Spleen (tissue), 13 donors: ENCODE measurements at regions of chr6 and their contacts with region 1.

Region 1: GRCh38 chr6:165439928-165440554 is 130.6 kb upstream of the C6orf118 start:
- DNase-seq: no peak
- H3K4me3 ChIP-seq: no peak overlapping the region
- H3K27ac ChIP-seq: no peak overlapping the region
- H3K4me1 ChIP-seq: no peaks in the 10 kb centered on the region
- H3K27me3 ChIP-seq: no peaks in the 10 kb centered on the region
- CTCF ChIP-seq: peak in 8 of 11 experiments; percentile 11 to 56 (median 50)
- POLR2A ChIP-seq: no peak

Region 2: GRCh38 chr6:165274611-165275010 is 165.4 kb before region 1 on chr6:
- intact Hi-C with region 1: no loop called
- DNase-seq: no peak
- H3K4me3 ChIP-seq: no peak overlapping the region
- H3K27ac ChIP-seq: no peak overlapping the region
- H3K4me1 ChIP-seq: no peaks in the 10 kb centered on the region
- H3K27me3 ChIP-seq: no peaks in the 10 kb centered on the region
- CTCF ChIP-seq: no peak
- POLR2A ChIP-seq: no peak

Region 3: DNA sequence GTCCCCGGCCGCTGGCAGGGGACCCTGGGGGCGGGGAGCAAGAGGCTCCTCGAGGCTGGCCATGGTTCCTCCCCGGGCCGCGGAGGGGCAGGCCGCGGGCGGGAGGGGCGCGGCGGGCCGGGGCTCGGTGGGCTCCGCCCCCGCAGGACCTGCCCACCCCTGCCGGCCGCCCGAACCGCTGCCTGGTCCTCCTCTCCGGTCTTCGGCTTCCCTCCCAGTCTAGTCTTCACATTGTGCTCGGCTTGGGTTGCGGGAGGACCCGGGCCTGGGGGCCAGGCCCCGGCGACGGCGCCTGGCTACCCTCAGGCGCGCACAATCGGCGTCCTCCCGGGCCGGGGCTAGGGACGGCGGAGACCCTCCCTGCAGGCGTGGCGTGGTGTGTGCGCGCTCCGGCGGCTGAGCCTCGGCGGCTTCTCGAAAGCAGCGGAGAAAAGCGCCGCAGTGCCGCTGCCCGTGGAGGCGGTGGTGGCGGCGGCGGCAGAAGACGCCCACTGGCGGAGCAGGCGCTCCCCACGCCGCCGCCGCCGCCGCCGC is 222.8 kb after region 1 on chr6 and contains the start of gene PDE10A:
- intact Hi-C with region 1: loop called (anchors 10 kb)
- DNase-seq: no peak
- H3K4me3 ChIP-seq: peak within 1 kb of the TSS; percentile 30 to 72 (median 50)
- H3K27ac ChIP-seq: peak within 1 kb of the TSS in 7 of 8 donors; percentile 55 to 85 (median 75)
- H3K4me1 ChIP-seq: peaks cover 0 to 46% (median 24%) of the 10 kb centered on the region in 6 donors
- H3K27me3 ChIP-seq: peaks cover 0 to 93% (median 49%) of the 10 kb centered on the region in 7 donors
- CTCF ChIP-seq: peak in 1 of 11 experiments; percentile 22
- POLR2A ChIP-seq: no peak
- total RNA-seq, gene PDE10A: 7.5 to 28.2 (median 10.6) TPM

Region 4: DNA sequence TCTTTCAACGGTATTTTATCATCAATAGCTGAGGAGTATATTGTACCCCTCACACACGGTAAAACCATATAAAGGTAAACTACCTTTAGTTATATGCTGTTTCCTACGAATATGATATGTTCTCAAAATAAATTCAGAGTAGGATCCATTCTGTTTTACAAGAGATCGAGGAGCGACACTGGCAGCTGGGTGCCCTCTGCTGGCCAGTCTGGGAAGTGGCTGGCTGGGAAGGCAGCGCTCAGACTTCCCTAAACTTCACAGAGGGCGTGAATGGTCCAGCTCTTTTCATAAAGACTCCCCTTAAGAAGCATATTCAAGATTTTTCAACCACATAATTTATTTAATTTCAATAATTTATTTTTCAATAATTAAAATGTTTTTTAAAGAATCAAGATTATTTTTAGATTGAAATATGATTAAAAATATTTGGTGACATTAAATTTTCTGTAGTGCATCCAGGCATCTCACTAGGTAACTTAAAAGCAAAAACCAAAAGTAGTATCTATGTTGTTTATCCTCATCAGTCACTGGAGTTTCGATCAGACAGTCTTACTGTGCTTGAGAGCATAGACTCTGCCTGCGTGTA is 410.5 kb after region 1 on chr6:
- intact Hi-C with region 1: loop called (anchors 5 kb)
- DNase-seq: peak; percentile 89
- H3K4me3 ChIP-seq: no peak overlapping the region
- H3K27ac ChIP-seq: no peak overlapping the region
- H3K4me1 ChIP-seq: peaks cover 0 to 14% (median 3%) of the 10 kb centered on the region in 6 donors
- H3K27me3 ChIP-seq: peaks cover 0 to 93% (median 25%) of the 10 kb centered on the region in 7 donors
- CTCF ChIP-seq: peak; percentile 55 to 97 (median 94)
- POLR2A ChIP-seq: no peak